ENCODE measurements at regions of chr9 and their contacts with region 1.

Region 1: DNA sequence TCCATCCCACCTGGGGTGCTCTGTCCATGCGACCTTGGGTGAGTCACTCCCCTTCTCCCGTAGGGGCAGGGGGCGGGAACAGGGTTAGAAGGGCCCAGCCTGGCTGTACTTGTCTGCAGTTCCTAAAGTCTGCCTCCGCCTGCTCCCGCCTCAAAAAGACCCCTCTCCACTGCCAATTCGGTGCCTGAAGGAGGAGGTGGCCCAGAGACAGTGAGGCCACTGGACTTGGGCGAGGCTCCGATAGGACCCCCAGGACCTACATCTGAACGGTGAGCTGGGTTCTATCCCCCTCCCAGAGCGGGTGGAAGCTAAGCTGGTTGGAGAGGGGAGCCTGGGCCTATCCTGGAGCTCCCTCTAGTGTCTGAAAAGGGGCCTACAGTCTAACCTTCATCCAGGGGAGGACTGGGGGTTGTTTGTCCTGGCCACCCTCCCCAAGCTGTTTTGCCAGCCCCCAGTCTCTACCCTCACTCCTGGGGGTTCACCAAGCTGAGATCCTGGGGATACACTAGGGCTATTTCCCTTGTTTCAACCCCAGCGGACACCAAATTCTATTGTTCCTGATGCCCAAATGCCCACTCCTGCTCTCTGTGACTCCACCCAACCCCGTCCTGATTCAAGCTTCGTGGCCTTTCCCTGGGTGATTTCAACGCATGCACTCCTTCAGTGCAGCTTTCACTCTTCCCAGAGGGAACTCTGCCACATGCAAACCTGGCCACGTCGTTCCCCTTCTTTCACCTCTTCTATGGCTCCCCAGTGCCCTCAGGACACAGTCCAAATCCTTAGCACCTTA is 6.1 kb upstream of the CRB2 start:
- DNase-seq: peak; percentile 71
- H3K4me3 Mint-ChIP-seq: no peak overlapping the region
- H3K27ac Mint-ChIP-seq: no peak overlapping the region
- H3K4me1 Mint-ChIP-seq: no peaks in the 10 kb centered on the region
- H3K27me3 Mint-ChIP-seq: peaks cover 6% of the 10 kb centered on the region

Region 2: DNA sequence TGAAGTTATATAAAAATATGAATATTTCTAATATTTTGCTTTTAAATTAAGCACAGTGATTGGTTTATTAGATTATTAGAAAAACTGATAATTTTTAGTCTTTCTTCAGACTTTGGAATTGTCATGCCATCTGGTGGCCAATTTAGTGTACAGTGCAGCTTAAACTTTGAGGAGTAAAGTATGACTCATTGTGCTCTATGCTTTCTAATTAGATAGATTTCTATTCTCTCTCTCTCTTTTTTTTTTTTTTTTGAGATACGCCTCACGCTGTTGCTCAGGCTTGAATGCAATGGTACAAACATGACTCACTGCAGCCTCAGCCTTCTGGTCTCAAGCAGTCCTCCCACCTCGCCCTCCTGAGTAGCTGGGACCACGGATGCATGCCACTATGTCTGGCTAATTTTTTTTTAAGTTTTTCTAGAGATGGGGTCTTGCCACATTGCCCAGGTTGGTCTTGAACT is 358.5 kb before region 1 on chr9:
- CTCF ChIA-PET with region 1: interaction called, 12 read pairs
- POLR2A ChIA-PET with region 1: no interaction called
- DNase-seq: peak; percentile 27
- H3K4me3 Mint-ChIP-seq: no peak overlapping the region
- H3K27ac Mint-ChIP-seq: no peak overlapping the region
- H3K4me1 Mint-ChIP-seq: peaks cover 8% of the 10 kb centered on the region
- H3K27me3 Mint-ChIP-seq: no peaks in the 10 kb centered on the region

Region 3: GRCh38 chr9:123093141-123093540 is 256.7 kb before region 1 on chr9:
- CTCF ChIA-PET with region 1: interaction called, 11 read pairs
- POLR2A ChIA-PET with region 1: no interaction called
- DNase-seq: no peak
- H3K4me3 Mint-ChIP-seq: no peak overlapping the region
- H3K27ac Mint-ChIP-seq: no peak overlapping the region
- H3K4me1 Mint-ChIP-seq: no peaks in the 10 kb centered on the region
- H3K27me3 Mint-ChIP-seq: no peaks in the 10 kb centered on the region

Region 4: GRCh38 chr9:123265833-123266232 is 84.1 kb before region 1 on chr9:
- CTCF ChIA-PET with region 1: interaction called, 14 read pairs
- POLR2A ChIA-PET with region 1: no interaction called
- DNase-seq: no peak
- H3K4me3 Mint-ChIP-seq: no peak overlapping the region
- H3K27ac Mint-ChIP-seq: no peak overlapping the region
- H3K4me1 Mint-ChIP-seq: peaks cover 19% of the 10 kb centered on the region
- H3K27me3 Mint-ChIP-seq: peaks cover 4% of the 10 kb centered on the region

Region 5: GRCh38 chr9:123360161-123361085 is 10.5 kb after region 1 on chr9:
- CTCF ChIA-PET with region 1: interaction called, 13 read pairs
- POLR2A ChIA-PET with region 1: interaction called, 4 read pairs
- DNase-seq: peak; percentile 36
- H3K4me3 Mint-ChIP-seq: no peak overlapping the region
- H3K27ac Mint-ChIP-seq: no peak overlapping the region
- H3K4me1 Mint-ChIP-seq: peaks cover 18% of the 10 kb centered on the region
- H3K27me3 Mint-ChIP-seq: peaks cover 2% of the 10 kb centered on the region

Measured in activated CD4-positive, alpha-beta memory T cell treated with anti-CD3 and anti-CD28 coated beads, Interleukin-2, amount 10 ng/mL, durations not matched to agents 7 days and 5 days (primary cell).